Natural killer cell (primary cell): ENCODE measurements at regions of chr11 and their contacts with region 1.

Region 1: GRCh38 chr11:124961972-124962609 is 8.1 kb downstream of the CCDC15 start:
- DNase-seq: peak in 1 of 2 donors; percentile 84
- ATAC-seq: peak; percentile 90 to 99 (median 97)
- H3K4me3 ChIP-seq: no peak overlapping the region
- H3K4me3 Mint-ChIP-seq: no peak overlapping the region
- H3K27ac ChIP-seq: no peak overlapping the region
- H3K27ac Mint-ChIP-seq: no peak overlapping the region
- H3K4me1 ChIP-seq: no peaks in the 10 kb centered on the region
- H3K4me1 Mint-ChIP-seq: no peaks in the 10 kb centered on the region
- H3K27me3 ChIP-seq: no peaks in the 10 kb centered on the region
- H3K27me3 Mint-ChIP-seq: no peaks in the 10 kb centered on the region
- CTCF ChIP-seq: peak; percentile 81

Region 2: GRCh38 chr11:125141686-125142535 is 179.8 kb after region 1 on chr11:
- intact Hi-C with region 1: loop called (anchors 1 kb)
- DNase-seq: peak; percentile 58 to 75
- ATAC-seq: peak; percentile 87 to 99 (median 96)
- H3K4me3 ChIP-seq: no peak overlapping the region
- H3K4me3 Mint-ChIP-seq: no peak overlapping the region
- H3K27ac ChIP-seq: no peak overlapping the region
- H3K27ac Mint-ChIP-seq: no peak overlapping the region
- H3K4me1 ChIP-seq: peaks cover 4% of the 10 kb centered on the region
- H3K4me1 Mint-ChIP-seq: peaks cover 6% of the 10 kb centered on the region in 2 donors
- H3K27me3 ChIP-seq: peaks cover 5% of the 10 kb centered on the region
- H3K27me3 Mint-ChIP-seq: peaks cover 28 to 44% of the 10 kb centered on the region in 2 donors
- CTCF ChIP-seq: peak; percentile 99

Region 3: DNA sequence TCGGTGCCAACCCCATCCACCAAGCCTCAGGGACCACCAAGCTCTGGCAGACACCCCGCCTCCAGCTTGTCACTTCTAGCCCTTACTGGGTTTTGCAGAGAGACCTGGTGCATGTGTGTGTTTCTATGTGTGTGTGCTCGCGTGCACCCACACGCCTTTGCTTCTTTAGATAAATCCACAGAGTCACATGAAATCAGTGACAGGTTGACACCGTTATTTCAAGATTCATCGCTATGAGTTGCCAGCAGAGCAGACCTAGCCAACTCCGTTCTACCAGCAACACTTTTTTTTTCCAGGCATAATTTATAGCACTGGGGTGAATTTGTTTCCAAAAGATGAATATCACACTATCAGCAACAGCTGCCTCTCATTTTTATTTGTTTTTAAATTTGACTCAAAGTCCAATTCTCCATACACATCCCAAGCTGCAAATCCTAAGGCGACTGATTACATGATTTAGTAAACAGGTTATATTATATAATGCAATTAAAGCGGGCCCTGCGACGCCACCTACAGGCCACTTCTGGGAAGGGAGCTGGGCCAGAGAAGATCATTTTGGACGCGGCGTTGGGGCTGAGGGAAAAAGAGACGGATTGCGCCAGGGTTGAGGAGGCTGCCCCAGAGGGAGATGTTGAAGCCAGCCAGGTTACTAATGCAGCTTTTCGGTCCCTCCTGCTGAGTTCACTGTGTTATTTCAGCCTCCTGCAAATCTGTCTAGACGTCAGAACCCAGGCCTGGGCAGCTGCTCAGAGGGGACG is 383.5 kb after region 1 on chr11:
- intact Hi-C with region 1: loop called (anchors 2 kb)
- DNase-seq: peak in 1 of 2 donors; percentile 54
- ATAC-seq: peak in 1 of 3 donors; percentile 62
- H3K4me3 ChIP-seq: no peak overlapping the region
- H3K4me3 Mint-ChIP-seq: no peak overlapping the region
- H3K27ac ChIP-seq: no peak overlapping the region
- H3K27ac Mint-ChIP-seq: no peak overlapping the region
- H3K4me1 ChIP-seq: no peaks in the 10 kb centered on the region
- H3K4me1 Mint-ChIP-seq: peaks cover 0 to 5% of the 10 kb centered on the region in 2 donors
- H3K27me3 ChIP-seq: no peaks in the 10 kb centered on the region
- H3K27me3 Mint-ChIP-seq: peaks cover 13 to 14% of the 10 kb centered on the region in 2 donors
- CTCF ChIP-seq: peak; percentile 53

Region 4: DNA sequence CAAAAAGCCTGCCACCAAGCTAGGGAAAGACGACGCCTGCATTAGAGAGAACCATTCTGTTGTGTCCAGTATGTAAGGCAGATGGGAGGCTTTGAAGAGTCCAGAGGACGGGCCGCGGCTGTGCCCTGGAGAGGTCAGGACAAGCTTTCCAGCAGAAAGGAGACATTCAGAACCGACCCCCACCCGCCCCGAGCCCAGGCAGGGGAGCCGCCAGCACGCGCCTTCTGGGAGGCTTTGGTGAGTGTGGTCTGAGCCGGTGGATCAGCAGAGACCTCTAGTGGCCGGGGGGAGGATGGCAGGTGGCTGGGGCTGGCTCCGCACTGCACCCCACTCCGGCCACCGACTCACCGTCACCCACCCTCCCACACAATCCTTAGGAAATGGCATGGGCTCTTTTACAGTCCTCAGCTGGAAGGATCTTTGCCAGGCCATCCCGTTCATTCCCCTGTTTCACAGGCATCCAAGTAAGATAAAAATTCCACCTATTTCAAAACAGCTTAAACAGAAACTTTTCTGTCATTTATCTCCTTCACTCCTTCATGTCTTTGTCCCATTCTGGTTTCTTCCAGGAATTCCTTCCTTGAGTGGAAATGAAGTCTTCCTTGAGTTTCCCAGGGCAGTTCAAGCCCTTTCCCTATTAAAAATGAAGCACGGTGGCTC is 442.8 kb after region 1 on chr11:
- intact Hi-C with region 1: loop called (anchors 2 kb)
- DNase-seq: peak; percentile 63 to 74
- ATAC-seq: peak; percentile 87 to 100 (median 96)
- H3K4me3 ChIP-seq: no peak overlapping the region
- H3K4me3 Mint-ChIP-seq: no peak overlapping the region
- H3K27ac ChIP-seq: no peak overlapping the region
- H3K27ac Mint-ChIP-seq: no peak overlapping the region
- H3K4me1 ChIP-seq: peaks cover 7% of the 10 kb centered on the region
- H3K4me1 Mint-ChIP-seq: peaks cover 8 to 10% of the 10 kb centered on the region in 2 donors
- H3K27me3 ChIP-seq: peaks cover 14% of the 10 kb centered on the region
- H3K27me3 Mint-ChIP-seq: peaks cover 44 to 67% of the 10 kb centered on the region in 2 donors
- CTCF ChIP-seq: peak; percentile 84